Vagina (tissue), 2 donors: ENCODE measurements at regions of chr10 and their contacts with region 1.

Region 1: DNA sequence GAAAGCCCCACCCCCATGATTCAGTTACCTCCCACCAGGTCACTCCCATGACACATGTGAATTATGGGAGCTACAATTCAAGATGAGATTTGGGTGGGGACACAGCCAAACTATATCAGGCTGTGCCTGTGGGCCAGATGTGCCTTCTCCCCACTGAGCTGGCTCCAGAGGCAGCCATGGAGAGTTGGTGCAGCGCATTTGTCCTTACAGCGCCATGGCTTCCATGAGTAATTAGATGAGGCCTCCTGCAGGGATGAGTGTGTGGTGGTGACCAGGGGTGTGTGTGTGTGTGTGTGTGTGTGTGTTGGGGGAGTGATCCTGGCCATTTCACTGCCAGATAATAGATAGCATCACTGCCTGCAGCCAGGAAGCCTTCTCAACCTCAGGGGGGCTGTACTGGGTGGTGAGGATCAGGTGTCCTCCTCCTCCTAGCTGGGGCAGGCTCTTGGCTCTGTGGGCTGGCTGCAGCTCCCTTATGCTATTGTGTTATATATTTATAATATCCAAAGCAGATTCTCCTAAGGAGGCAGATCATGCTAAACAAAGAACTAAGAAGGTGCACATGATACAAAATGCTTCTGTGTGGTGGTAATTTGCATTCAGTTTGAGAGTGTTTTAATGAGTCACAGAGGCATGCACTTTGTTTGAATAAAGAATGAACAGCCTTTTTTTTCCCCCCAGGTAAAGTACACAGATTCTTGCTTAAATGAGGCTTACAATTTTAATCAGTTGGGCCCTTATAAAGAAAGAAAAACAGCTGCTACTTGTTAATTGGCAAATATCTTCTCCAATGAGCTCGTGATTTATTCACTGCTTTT is 94.8 kb downstream of the FANK1 start:
- DNase-seq: no peak
- H3K4me3 ChIP-seq: no peak overlapping the region
- H3K27ac ChIP-seq: no peak overlapping the region
- H3K4me1 ChIP-seq: no peaks in the 10 kb centered on the region
- H3K27me3 ChIP-seq: no peaks in the 10 kb centered on the region
- CTCF ChIP-seq: no peak
- POLR2A ChIP-seq: no peak

Region 2: GRCh38 chr10:126041781-126042231 is 50.6 kb after region 1 on chr10:
- intact Hi-C with region 1: no loop called
- DNase-seq: no peak
- H3K4me3 ChIP-seq: no peak overlapping the region
- H3K27ac ChIP-seq: no peak overlapping the region
- H3K4me1 ChIP-seq: no peaks in the 10 kb centered on the region
- H3K27me3 ChIP-seq: no peaks in the 10 kb centered on the region
- CTCF ChIP-seq: no peak
- POLR2A ChIP-seq: no peak

Region 3: DNA sequence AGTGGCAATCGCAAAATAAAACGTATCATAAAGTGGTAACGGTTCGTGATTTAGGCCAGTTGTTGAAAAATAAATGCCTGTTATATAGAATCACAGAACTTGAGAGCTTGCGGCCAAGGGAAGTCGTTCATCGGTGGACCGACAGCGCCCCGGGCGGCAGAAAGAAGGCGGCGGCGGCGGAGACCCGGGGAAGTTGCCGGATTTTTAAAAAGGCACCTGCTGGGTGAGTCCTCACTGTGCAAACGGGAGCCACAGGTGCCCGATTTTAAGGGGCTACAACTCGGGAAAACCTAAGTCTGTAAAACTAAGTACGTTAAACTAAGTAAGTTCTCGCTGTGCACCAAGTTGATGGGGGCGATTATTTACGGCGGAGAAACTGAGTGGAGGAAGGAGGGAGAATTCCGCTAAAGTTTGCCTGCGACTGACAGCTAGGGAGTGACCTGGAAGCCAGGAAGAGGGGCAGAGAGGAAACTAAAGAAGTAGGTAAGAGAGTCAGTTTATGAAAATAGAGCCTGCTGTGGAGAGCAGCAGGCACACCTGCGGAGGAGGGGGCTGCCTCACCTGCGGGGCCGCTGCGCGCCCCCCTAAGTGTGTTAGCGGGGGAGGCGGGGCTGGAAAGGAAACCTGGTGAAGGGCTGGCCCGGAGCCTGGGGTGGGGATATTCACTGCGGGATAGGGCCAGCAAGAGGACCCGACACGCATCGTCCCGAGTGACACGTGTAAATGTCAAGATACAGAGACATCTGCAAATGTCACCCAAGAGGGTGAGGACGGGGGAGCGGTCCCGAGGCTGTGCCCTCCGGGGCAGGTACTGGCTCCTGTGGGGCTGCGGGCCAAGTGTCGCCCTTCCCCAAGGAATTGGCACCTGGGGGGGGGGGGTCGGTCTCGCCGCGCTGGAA is 396.1 kb after region 1 on chr10:
- intact Hi-C with region 1: loop called (anchors 5 kb)
- DNase-seq: no peak
- H3K4me3 ChIP-seq: peak overlapping the region; percentile 45 to 54
- H3K27ac ChIP-seq: no peak overlapping the region
- H3K4me1 ChIP-seq: peaks cover 6% of the 10 kb centered on the region
- H3K27me3 ChIP-seq: no peaks in the 10 kb centered on the region
- CTCF ChIP-seq: peak; percentile 15 to 65 (median 60)
- POLR2A ChIP-seq: no peak